Activated CD8-positive, alpha-beta T cell treated with anti-CD3 and anti-CD28 coated beads, Interleukin-2, amount 10 ng/mL, durations not matched to agents 7 days and 5 days (primary cell): ENCODE measurements at regions of chr22 and their contacts with region 1.

Region 1: GRCh38 chr22:23243006-23243573 is 62.8 kb downstream of the BCR start:
- DNase-seq: peak; percentile 82
- ATAC-seq: peak; percentile 91
- H3K4me3 Mint-ChIP-seq: peak overlapping the region; percentile 59
- H3K27ac Mint-ChIP-seq: peak overlapping the region; percentile 88
- H3K4me1 Mint-ChIP-seq: peaks cover 69% of the 10 kb centered on the region
- H3K27me3 Mint-ChIP-seq: no peaks in the 10 kb centered on the region

Region 2: GRCh38 chr22:23178512-23179254 is 64.4 kb before region 1 on chr22:
- CTCF ChIA-PET with region 1: interaction called, 18 read pairs
- POLR2A ChIA-PET with region 1: interaction called, 11 read pairs
- DNase-seq: peak; percentile 69
- ATAC-seq: peak; percentile 17
- H3K4me3 Mint-ChIP-seq: peak overlapping the region; percentile 74
- H3K27ac Mint-ChIP-seq: no peak overlapping the region
- H3K4me1 Mint-ChIP-seq: peaks cover 61% of the 10 kb centered on the region
- H3K27me3 Mint-ChIP-seq: peaks cover 5% of the 10 kb centered on the region

Region 3: GRCh38 chr22:23219822-23220484 is 23.1 kb before region 1 on chr22:
- CTCF ChIA-PET with region 1: interaction called, 10 read pairs
- POLR2A ChIA-PET with region 1: no interaction called
- DNase-seq: peak; percentile 63
- ATAC-seq: peak; percentile 60
- H3K4me3 Mint-ChIP-seq: peak overlapping the region; percentile 33
- H3K27ac Mint-ChIP-seq: peak overlapping the region; percentile 76
- H3K4me1 Mint-ChIP-seq: peaks cover 89% of the 10 kb centered on the region
- H3K27me3 Mint-ChIP-seq: no peaks in the 10 kb centered on the region